Tibial artery (tissue), 4 donors: ENCODE measurements at regions of chr1 and their contacts with region 1.

Region 1: DNA sequence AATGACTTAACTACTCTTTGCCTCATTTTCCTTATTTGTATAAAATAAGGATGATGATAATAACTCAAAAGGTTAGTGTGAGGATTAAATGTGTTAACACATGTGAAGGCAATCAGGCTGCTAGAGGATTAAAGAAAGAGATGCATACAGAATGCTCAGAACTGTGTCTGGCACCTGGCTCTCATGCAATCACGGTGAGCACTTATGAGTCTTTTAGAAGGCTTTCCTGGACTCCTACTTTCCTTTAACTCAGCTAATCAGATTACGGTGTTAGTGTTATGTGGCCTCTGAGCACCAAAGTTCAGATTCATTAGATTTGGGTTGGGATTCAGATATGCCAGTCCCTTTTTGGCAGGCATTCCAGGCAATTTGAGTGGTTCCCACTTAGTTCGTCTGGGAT is 311.6 kb upstream of the USP24 start:
- DNase-seq: no peak
- H3K4me3 ChIP-seq: no peak overlapping the region
- H3K27ac ChIP-seq: no peak overlapping the region
- H3K4me1 ChIP-seq: no peaks in the 10 kb centered on the region
- H3K27me3 ChIP-seq: no peaks in the 10 kb centered on the region
- CTCF ChIP-seq: no peak

Region 2: GRCh38 chr1:55474168-55474786 is 52.4 kb before region 1 on chr1:
- intact Hi-C with region 1: no loop called
- DNase-seq: no peak
- H3K4me3 ChIP-seq: no peak overlapping the region
- H3K27ac ChIP-seq: no peak overlapping the region
- H3K4me1 ChIP-seq: no peaks in the 10 kb centered on the region
- H3K27me3 ChIP-seq: no peaks in the 10 kb centered on the region
- CTCF ChIP-seq: no peak

Region 3: DNA sequence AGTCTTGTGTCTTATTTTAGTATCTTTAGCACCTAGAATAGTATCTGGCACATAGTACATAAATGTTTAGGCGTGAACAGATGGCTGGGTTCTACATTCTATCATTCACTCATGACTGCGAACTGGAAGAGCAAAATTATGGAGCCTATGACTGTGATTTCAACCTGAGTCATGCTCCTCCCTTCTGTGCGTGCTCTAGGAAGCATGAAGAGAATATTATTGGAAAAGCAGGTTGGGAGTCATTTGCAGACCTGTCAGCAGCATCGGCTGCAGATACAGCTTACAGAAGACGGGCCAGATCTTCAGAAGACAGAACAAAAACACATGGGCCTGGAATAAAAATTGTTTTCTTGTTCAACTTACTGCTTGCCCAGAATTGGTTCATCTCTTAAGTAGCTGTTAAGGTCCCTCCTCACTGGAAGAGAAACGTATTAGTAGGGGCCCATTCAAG is 32.5 kb after region 1 on chr1:
- intact Hi-C with region 1: loop called (anchors 2 kb)
- DNase-seq: no peak
- H3K4me3 ChIP-seq: no peak overlapping the region
- H3K27ac ChIP-seq: peak overlapping the region; percentile 1 to 15
- H3K4me1 ChIP-seq: peaks cover 0 to 21% (median 10%) of the 10 kb centered on the region in 4 donors
- H3K27me3 ChIP-seq: no peaks in the 10 kb centered on the region
- CTCF ChIP-seq: no peak